ENCODE measurements at regions of chr9 and their contacts with region 1.

Region 1: GRCh38 chr9:128881901-128882681 is at the starts of genes KYAT1 and LRRC8A:
- DNase-seq: peak; percentile 99
- ATAC-seq: peak; percentile 93 to 97 (median 94)
- H3K4me3 ChIP-seq: peak within 1 kb of the TSS; percentile 93
- H3K27ac ChIP-seq: peak within 1 kb of the TSS; percentile 96
- H3K4me1 ChIP-seq: peaks cover 32% of the 10 kb centered on the region
- H3K27me3 ChIP-seq: no peaks in the 10 kb centered on the region
- CTCF ChIP-seq: no peak
- total RNA-seq, gene KYAT1: 6.4 to 8.9 (median 7.1) TPM
- total RNA-seq, gene LRRC8A: 12.2 to 22.4 (median 18.3) TPM

Region 2: DNA sequence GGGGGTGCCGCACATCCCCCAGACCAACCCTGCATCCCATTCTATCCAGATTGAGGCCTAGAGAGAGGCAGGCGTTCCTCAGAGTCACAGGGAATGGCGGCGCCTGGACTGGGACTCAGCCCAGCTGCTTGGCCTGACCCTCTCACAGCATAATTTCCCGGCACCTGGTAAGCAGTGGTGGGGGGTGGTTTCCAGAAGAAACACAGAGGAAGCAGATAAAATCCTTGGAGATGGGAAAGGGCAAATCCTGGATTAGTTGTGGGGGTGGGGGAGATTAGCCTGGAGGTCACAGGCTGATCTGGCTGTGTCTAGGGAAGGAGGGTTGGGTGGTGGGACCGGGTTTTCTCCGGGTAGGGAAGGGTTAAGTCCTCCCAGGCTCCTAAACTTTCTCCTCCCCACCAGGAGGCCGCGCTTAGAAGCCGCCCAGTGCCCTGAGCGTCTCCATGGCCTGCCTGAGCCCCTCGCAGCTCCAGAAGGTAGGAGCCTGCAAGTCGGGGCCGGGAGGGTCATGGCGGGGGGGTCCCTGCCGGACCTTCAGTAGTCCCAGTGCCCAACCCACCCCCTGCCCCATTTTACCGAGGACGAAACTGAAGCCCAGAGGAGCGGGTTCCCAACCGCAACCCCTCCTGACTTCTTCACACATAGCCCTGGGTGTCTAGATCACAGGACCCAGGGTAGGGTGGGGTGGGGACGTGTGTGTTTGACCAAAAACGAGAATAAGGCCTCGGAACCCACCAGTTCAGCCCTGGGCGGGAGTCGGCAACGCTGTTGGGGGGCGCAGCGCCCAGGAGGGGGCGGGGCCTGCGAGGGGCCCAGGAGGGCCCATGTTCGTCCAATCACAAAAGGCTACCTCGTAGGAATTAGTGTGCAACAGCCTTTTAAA is 40.0 kb after region 1 on chr9:
- intact Hi-C with region 1: loop called (anchors 5 kb)
- DNase-seq: peak; percentile 56 to 78
- ATAC-seq: peak; percentile 45 to 70 (median 58)
- H3K4me3 ChIP-seq: peak overlapping the region; percentile 71
- H3K27ac ChIP-seq: peak overlapping the region; percentile 82
- H3K4me1 ChIP-seq: peaks cover 14% of the 10 kb centered on the region
- H3K27me3 ChIP-seq: no peaks in the 10 kb centered on the region
- CTCF ChIP-seq: no peak

Region 3: DNA sequence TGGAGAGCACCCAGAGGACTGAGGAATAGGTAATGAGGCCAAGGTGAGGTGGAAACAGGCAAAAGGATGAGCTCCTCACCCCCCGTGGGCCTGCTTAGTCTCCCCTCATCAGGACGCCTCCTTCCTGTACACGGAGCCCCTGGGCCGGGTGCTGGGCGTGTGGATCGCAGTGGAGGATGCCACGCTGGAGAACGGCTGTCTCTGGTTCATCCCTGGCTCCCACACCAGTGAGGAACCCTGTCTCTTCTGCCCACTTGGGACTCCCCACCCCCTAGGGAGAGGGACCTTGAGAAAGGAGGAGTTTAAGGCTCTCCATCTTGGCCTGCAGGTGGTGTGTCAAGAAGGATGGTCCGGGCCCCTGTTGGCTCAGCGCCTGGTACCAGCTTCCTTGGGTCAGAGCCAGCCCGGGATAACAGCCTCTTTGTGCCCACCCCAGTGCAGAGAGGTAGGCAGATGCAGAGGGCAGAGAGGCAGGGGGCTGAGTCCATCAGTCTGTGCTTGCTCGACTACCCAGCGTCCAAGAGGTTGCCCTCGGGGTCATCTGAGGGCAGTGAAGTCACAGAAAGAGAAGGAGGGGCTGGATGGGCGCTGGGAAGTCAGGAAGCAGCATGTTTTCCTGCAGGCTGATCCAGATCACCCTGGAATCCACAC is 58.3 kb after region 1 on chr9:
- intact Hi-C with region 1: no loop called
- DNase-seq: peak in 1 of 2 donors; percentile 42
- ATAC-seq: peak in 2 of 4 donors; percentile 26 to 42
- H3K4me3 ChIP-seq: no peak overlapping the region
- H3K27ac ChIP-seq: no peak overlapping the region
- H3K4me1 ChIP-seq: no peaks in the 10 kb centered on the region
- H3K27me3 ChIP-seq: no peaks in the 10 kb centered on the region
- CTCF ChIP-seq: no peak

Region 4: DNA sequence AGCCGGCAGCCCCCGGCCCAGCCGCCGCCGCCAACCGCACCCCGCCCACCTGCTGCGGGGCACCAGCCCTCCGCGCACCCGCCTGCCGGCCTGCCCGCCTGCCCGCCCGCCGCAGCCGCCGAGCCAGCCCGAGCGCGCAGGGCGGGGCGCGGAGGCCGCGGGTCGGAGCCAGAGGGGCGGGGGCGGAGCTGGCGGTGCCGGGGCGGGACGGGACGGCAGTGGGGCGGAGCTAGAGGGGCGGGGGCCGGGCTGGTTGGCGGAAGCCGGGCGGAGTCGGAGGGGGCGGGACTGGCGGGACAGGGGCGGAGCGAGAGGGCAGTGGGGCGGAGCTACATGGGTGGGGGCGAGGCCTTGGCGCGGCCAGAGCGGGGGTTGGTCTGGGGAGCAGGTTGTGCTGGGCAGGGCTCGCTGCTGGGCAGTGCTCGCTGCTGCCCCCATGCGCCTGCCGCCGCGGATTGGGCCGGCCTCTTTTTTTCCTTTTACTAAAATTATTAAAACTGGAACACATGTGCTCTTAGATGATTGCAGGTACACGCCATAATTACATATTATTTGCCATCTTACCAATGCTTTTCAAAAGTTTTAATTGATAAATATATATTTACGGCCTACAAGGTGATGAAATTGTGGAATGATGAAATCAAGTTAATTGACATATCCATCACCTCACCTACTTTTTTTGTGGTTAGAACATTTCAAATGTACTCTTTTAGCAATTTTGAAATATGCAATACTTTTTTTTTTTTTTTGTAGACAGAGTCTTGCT is 146.3 kb after region 1 on chr9 and contains the start of gene SH3GLB2:
- intact Hi-C with region 1: loop called in 1 of 2 experiments (anchors 5 kb)
- DNase-seq: peak; percentile 93 to 98
- ATAC-seq: peak; percentile 88 to 93 (median 90)
- H3K4me3 ChIP-seq: peak within 1 kb of the TSS; percentile 92
- H3K27ac ChIP-seq: peak within 1 kb of the TSS; percentile 88
- H3K4me1 ChIP-seq: peaks cover 20% of the 10 kb centered on the region
- H3K27me3 ChIP-seq: no peaks in the 10 kb centered on the region
- CTCF ChIP-seq: peak; percentile 91
- total RNA-seq, gene SH3GLB2: 33.8 to 56.8 (median 45.1) TPM

Region 5: GRCh38 chr9:129040113-129040643 is 158.1 kb after region 1 on chr9:
- intact Hi-C with region 1: no loop called
- DNase-seq: no peak
- ATAC-seq: no peak
- H3K4me3 ChIP-seq: no peak overlapping the region
- H3K27ac ChIP-seq: no peak overlapping the region
- H3K4me1 ChIP-seq: peaks cover 16% of the 10 kb centered on the region
- H3K27me3 ChIP-seq: no peaks in the 10 kb centered on the region
- CTCF ChIP-seq: no peak